ENCODE measurements at regions of chr11 and their contacts with region 1.

Region 1: DNA sequence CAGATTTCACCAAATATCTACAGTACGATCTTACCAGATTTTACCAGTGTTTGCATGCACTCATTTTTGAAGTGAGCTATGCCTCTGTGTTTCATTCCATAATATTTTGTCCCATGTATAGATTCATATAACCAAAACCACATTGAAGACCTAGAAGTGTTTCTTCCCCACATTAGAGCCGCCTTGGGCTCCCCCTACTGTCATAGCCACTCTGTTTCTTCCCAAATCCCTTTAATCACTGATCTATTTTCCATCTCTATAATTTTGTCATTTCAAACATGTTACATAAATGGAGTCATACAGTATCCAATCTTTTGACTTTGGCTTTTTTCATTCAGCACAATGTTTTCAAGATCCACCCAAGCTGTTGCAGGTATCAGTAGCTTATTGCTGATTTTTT is 12.7 kb downstream of the MRGPRX3 start:
- DNase-seq: no peak
- H3K4me3 ChIP-seq: no peak overlapping the region
- H3K27ac ChIP-seq: no peak overlapping the region
- H3K4me1 ChIP-seq: peaks cover 3% of the 10 kb centered on the region
- H3K27me3 ChIP-seq: peaks cover 0 to 1% of the 10 kb centered on the region in 2 experiments
- CTCF ChIP-seq: no peak
- POLR2A ChIP-seq: no peak

Region 2: DNA sequence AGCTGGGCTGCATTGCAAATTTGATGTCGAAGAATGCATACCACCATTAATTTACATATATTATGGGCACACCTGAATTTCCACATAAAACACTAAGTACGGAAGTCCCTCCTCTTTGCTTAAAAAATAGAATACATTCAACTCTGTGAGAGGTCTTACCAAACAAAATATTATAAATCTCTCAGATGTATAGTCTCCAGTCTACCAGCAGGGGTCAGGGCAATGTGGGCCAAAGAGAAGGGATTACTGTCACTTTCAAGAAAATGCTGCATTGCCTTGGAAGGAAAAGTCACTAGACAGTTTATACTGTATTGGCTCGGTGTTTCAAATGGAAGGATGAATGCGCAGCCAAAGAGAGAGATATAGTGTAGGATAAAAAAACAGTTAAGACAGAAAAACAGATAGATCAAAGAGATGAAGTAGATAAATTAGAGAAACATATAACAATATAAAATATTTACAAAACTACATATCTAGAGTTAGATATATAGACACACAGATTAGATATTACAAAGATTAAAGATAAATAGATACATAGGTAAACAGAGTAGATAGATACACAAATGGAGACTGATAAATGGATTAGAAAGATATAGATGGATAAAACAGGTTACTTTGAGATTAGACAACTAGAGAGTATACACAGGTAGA is 153.1 kb before region 1 on chr11:
- CTCF ChIA-PET with region 1: no interaction called
- POLR2A ChIA-PET with region 1: no interaction called
- dilution Hi-C with region 1: no loop called
- intact Hi-C with region 1: loop called (anchors 1 kb)
- DNase-seq: peak; percentile 59
- H3K4me3 ChIP-seq: no peak overlapping the region
- H3K27ac ChIP-seq: no peak overlapping the region
- H3K4me1 ChIP-seq: no peaks in the 10 kb centered on the region
- H3K27me3 ChIP-seq: no peaks in the 10 kb centered on the region
- CTCF ChIP-seq: peak; percentile 68 to 70
- POLR2A ChIP-seq: no peak

Region 3: DNA sequence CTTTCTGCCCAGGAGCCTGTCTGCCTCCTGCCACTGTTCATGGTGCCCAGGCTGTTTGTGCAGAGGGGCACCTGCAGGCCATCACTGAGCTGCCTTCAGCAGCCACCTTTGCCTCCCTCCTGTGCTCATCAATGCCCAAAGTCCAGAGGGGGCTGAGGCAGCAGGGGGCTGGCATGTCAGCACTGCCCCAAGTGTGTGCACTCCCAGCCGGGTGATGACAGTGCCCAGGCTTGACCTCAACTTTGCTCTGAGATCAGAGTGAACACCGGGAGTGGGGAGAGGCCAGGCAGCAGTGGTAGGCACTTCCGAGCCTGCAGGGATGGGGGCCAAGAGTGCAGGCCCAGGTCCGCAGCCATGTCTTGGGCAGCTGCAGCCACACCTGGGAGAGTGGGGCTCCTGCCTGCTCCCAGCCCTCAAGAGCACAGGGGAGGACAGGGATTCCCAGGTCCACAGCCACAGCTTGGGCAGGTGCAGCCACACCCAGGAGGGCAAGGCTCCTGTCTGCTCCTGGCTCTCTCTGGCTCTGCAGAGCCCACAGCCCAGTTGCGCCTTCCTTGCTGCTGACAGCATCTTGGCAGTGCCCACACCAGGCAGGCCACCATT is 76.3 kb after region 1 on chr11:
- CTCF ChIA-PET with region 1: no interaction called
- POLR2A ChIA-PET with region 1: no interaction called
- dilution Hi-C with region 1: no loop called
- intact Hi-C with region 1: no loop called
- DNase-seq: no peak
- H3K4me3 ChIP-seq: no peak overlapping the region
- H3K27ac ChIP-seq: no peak overlapping the region
- H3K4me1 ChIP-seq: no peaks in the 10 kb centered on the region
- H3K27me3 ChIP-seq: no peaks in the 10 kb centered on the region
- CTCF ChIP-seq: no peak
- POLR2A ChIP-seq: no peak

Region 4: DNA sequence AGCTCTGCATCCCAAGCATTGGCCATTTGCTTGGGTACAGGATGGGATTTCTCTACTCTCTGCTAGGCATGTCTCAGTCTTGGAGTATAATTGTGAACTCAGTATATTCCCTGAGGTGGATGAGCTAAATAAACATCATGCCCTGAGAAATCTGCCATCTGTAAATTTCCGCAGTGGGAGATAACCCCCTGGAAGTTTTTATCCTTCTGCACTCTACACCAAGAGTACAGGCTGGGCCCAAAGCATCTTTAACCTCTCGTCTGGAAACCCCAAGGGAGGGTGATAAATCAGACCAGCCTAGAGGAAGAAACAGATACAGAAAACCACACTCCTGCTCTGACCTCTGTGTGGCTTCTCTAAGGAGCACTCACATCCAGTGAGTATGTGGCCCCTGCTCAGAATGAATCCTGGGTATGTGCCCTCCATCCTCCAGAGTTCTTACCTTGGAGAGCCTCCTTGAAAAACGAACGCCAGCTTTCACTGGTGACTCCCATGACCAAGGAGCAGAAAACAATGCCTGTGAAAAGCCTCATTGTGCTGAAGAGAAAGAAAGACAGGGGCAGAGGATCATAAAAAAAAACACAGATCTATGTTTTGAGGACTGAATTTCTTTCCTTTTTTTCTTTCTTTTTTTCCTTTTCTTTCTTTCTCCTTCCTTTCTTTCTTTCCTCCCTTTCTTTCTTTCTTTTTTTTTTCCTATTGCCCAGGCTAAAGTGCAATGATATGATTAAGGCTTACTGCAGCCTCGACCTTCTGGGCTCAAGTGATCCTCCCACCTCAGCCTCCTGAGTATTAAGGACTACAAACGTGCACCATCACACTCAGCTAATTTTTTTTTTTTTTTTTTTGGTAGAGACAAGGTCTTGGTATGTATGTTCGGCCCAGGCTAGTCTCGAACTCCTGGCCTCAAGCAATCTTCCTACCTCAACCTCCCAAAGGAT is 90.6 kb after region 1 on chr11:
- CTCF ChIA-PET with region 1: no interaction called
- POLR2A ChIA-PET with region 1: no interaction called
- dilution Hi-C with region 1: no loop called
- intact Hi-C with region 1: no loop called
- DNase-seq: no peak
- H3K4me3 ChIP-seq: no peak overlapping the region
- H3K27ac ChIP-seq: no peak overlapping the region
- H3K4me1 ChIP-seq: no peaks in the 10 kb centered on the region
- H3K27me3 ChIP-seq: peaks cover 12% of the 10 kb centered on the region in 2 experiments
- CTCF ChIP-seq: no peak
- POLR2A ChIP-seq: no peak

Measured in endothelial cell of umbilical vein (primary cell).